Endothelial cell of umbilical vein (primary cell): ENCODE measurements at regions of chr14 and their contacts with region 1.

Region 1: GRCh38 chr14:54410215-54410614 is 13.4 kb downstream of the CDKN3 start:
- DNase-seq: no peak
- H3K4me3 ChIP-seq: no peak overlapping the region
- H3K27ac ChIP-seq: no peak overlapping the region
- H3K4me1 ChIP-seq: no peaks in the 10 kb centered on the region
- H3K27me3 ChIP-seq: no peaks in the 10 kb centered on the region
- CTCF ChIP-seq: no peak
- POLR2A ChIP-seq: no peak

Region 2: GRCh38 chr14:54116972-54117371 is 293.2 kb before region 1 on chr14:
- CTCF ChIA-PET with region 1: no interaction called
- POLR2A ChIA-PET with region 1: no interaction called
- dilution Hi-C with region 1: no loop called
- intact Hi-C with region 1: no loop called
- DNase-seq: peak; percentile 77
- H3K4me3 ChIP-seq: no peak overlapping the region
- H3K27ac ChIP-seq: peak overlapping the region; percentile 54
- H3K4me1 ChIP-seq: peaks cover 42% of the 10 kb centered on the region
- H3K27me3 ChIP-seq: no peaks in the 10 kb centered on the region
- CTCF ChIP-seq: no peak
- POLR2A ChIP-seq: no peak

Region 3: DNA sequence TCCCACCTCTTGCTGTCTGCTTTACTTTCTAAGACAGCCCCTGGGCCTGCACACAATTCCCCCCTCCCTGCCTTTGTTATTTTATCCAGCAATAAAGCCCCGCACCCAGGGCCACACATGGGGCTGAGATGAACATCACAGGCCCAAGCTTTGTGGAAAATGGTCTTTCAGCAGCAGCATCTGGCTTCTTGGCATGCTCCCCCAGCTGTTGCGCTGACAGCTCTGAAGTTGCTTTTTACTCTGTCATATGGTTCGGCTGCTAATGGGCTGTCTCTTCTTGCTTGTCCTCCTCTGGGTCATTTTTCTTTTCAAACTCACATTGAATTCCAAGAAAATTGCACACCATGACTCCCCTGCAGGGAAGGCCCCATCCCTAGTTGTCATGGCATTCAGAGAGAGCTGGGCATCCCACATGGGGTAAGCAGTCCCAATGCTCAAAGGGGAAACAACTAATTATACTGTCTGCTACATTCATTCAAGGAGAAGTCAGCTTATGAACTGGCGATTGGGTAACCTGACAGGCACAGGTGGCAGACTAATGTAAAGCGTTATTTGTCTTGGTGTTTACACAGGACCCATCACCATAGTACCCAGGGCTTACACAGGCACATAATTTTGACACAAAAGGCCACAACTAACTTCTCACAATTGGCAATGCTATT is 87.4 kb before region 1 on chr14:
- CTCF ChIA-PET with region 1: no interaction called
- POLR2A ChIA-PET with region 1: no interaction called
- dilution Hi-C with region 1: no loop called
- intact Hi-C with region 1: no loop called
- DNase-seq: no peak
- H3K4me3 ChIP-seq: no peak overlapping the region
- H3K27ac ChIP-seq: no peak overlapping the region
- H3K4me1 ChIP-seq: peaks cover 14% of the 10 kb centered on the region
- H3K27me3 ChIP-seq: no peaks in the 10 kb centered on the region
- CTCF ChIP-seq: no peak
- POLR2A ChIP-seq: no peak

Region 4: GRCh38 chr14:54450535-54450934 is 40.3 kb after region 1 on chr14:
- CTCF ChIA-PET with region 1: no interaction called
- POLR2A ChIA-PET with region 1: interaction called, 3 read pairs
- dilution Hi-C with region 1: no loop called
- intact Hi-C with region 1: loop called (anchors 1 kb)
- DNase-seq: no peak
- H3K4me3 ChIP-seq: no peak overlapping the region
- H3K27ac ChIP-seq: no peak overlapping the region
- H3K4me1 ChIP-seq: no peaks in the 10 kb centered on the region
- H3K27me3 ChIP-seq: peaks cover 27 to 48% of the 10 kb centered on the region in 2 experiments
- CTCF ChIP-seq: no peak
- POLR2A ChIP-seq: no peak

Region 5: DNA sequence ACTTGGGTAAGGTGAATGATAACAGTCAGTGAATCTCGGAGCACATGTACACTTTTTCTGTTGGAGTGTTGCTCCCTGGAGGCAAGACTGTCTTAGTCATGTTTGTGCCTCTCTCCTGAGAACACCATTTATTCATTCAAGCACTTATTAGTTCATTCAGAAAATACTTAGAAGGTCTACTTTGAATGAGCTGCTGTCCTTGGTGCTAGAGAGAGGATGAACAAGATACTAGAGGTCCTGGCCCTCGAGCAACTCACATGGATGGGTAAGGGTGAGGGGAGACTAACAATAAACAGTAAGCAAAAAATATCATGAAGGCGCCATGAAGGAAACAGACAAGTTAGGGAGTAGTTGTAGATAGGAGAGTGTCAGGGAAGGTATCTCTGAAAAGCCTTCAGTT is 139.6 kb after region 1 on chr14:
- CTCF ChIA-PET with region 1: no interaction called
- POLR2A ChIA-PET with region 1: no interaction called
- dilution Hi-C with region 1: no loop called
- intact Hi-C with region 1: no loop called
- DNase-seq: no peak
- H3K4me3 ChIP-seq: no peak overlapping the region
- H3K27ac ChIP-seq: no peak overlapping the region
- H3K4me1 ChIP-seq: no peaks in the 10 kb centered on the region
- H3K27me3 ChIP-seq: peaks cover 0 to 3% of the 10 kb centered on the region in 2 experiments
- CTCF ChIP-seq: no peak
- POLR2A ChIP-seq: no peak